ENCODE measurements at regions of chr2 and their contacts with region 1.

Region 1: GRCh38 chr2:216081487-216082116 is at the starts of genes PECR and TMEM169:
- DNase-seq: peak; percentile 88

Region 2: GRCh38 chr2:215784371-215784783 is 297.2 kb before region 1 on chr2:
- CTCF ChIA-PET with region 1: no interaction called
- POLR2A ChIA-PET with region 1: no interaction called
- DNase-seq: no peak

Region 3: DNA sequence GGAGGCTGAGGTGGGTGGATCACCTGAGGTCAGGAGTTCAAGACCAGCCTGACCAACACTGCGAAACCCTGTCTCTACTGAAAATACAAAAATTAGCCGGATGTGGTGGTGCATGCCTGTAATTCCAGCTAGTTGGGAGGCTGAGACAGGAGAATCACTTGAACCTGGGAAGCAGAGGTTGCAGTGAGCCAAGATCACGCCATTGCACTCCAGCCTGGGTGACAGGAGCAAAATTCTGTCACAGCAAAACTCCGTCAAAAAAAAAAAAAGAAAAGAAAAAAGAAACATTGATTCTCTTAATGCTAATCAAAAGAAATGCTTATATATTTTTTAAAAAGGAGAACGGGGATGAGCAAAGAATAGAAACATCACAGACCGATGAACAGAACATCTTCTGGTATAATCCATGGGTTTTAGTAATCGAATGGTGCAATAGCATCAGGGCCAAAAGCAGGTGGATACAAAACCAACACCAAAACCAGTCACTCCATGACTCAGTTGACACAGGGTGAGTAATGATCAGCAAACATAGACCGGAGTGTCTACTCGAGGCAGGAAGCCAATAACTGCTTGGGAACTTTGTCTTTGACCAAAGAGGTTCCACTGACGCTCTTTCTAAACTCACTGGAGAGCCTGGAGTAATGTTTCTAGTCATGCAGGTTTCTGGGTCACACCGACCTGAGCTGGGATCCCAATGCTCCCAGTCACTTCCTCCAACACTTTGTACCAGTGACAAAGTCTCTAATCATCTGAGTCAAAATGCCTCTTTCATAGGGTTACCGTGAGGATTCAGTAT is 99.3 kb before region 1 on chr2:
- CTCF ChIA-PET with region 1: no interaction called
- POLR2A ChIA-PET with region 1: no interaction called
- DNase-seq: no peak

Region 4: GRCh38 chr2:216108967-216109921 is 27.6 kb after region 1 on chr2 and contains the start of gene XRCC5:
- CTCF ChIA-PET with region 1: no interaction called
- POLR2A ChIA-PET with region 1: interaction called, 19 read pairs
- DNase-seq: peak; percentile 95

Measured in HEK293T (cell line).